ENCODE measurements at regions of chr1 and their contacts with region 1.

Region 1: GRCh38 chr1:163315773-163316374 is 5.9 kb upstream of the NUF2 start:
- DNase-seq: peak; percentile 49
- ATAC-seq: peak; percentile 24
- H3K4me3 ChIP-seq: no peak overlapping the region
- H3K4me3 Mint-ChIP-seq: no peak overlapping the region
- H3K27ac ChIP-seq: no peak overlapping the region
- H3K27ac Mint-ChIP-seq: no peak overlapping the region
- H3K4me1 ChIP-seq: peaks cover 1 to 2% of the 10 kb centered on the region in 2 donors
- H3K4me1 Mint-ChIP-seq: peaks cover 2% of the 10 kb centered on the region
- H3K27me3 ChIP-seq: no peaks in the 10 kb centered on the region
- H3K27me3 Mint-ChIP-seq: no peaks in the 10 kb centered on the region
- CTCF ChIP-seq: peak; percentile 85

Region 2: DNA sequence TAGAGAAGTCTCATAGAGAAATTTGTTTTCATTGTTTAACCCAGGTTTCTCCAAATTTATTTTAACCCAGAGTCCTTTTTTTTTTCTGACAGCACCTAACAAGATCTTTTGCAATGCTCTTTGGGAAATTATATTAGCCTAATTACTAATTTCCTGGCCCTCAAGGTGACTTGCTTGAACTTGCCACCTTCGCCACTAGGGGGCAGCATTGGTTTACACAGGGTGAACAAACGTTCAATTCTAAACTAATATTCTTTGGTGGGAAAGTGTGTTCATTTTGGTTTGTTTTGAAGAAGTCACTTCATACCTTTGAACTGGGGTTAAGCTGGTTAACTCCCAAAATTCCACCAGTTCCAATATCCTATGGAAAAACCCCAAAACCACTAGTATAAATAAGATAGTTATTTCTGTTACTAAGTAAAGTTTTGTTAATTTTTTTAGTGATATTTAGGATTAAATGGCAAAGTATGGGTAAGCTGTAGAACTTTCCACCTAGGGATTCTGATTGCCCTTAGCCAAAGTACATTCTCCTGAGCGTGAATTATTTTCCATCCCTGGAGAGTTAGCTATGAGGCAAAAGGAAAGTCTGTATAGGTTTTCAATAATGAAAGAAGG is 467.9 kb before region 1 on chr1:
- CTCF ChIA-PET with region 1: interaction called, 77 read pairs
- POLR2A ChIA-PET with region 1: no interaction called
- intact Hi-C with region 1: no loop called
- DNase-seq: peak; percentile 69
- ATAC-seq: peak; percentile 51
- H3K4me3 ChIP-seq: no peak overlapping the region
- H3K4me3 Mint-ChIP-seq: no peak overlapping the region
- H3K27ac ChIP-seq: no peak overlapping the region
- H3K27ac Mint-ChIP-seq: no peak overlapping the region
- H3K4me1 ChIP-seq: no peaks in the 10 kb centered on the region
- H3K4me1 Mint-ChIP-seq: no peaks in the 10 kb centered on the region
- H3K27me3 ChIP-seq: peaks cover 0 to 4% (median 0%) of the 10 kb centered on the region in 4 experiments
- H3K27me3 Mint-ChIP-seq: peaks cover 16% of the 10 kb centered on the region
- CTCF ChIP-seq: peak; percentile 96

Region 3: DNA sequence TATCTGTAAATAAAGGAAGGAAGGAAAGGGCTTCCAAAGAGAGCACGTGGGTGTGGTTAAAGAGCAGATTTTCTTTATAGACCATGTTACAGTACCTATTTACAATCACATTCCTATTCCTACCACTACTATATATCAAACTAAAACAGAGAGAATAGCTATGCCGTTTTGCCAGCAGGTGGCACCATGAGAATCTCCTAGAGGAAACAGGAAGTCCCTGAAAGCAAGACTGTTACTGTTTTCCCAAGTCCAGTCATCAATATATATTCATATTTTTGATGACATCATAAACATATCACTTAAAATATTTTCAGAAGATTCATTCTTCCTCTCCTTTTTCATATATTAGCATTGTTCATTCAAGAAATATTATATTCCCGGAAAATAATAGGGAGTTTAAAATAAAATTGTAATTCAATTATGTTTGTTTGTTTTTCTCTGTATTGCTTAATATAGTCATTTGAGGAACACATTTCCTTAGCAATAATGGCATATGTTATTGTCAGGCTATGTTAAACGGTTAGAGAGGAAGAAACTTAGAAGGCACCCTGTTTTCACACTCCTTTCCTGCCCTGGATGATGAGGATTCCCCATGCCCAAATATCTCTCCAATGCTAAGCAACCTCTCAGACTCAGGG is 461.5 kb before region 1 on chr1:
- CTCF ChIA-PET with region 1: interaction called, 77 read pairs
- POLR2A ChIA-PET with region 1: no interaction called
- intact Hi-C with region 1: no loop called
- DNase-seq: peak; percentile 57
- ATAC-seq: peak; percentile 41
- H3K4me3 ChIP-seq: no peak overlapping the region
- H3K4me3 Mint-ChIP-seq: no peak overlapping the region
- H3K27ac ChIP-seq: no peak overlapping the region
- H3K27ac Mint-ChIP-seq: no peak overlapping the region
- H3K4me1 ChIP-seq: no peaks in the 10 kb centered on the region
- H3K4me1 Mint-ChIP-seq: no peaks in the 10 kb centered on the region
- H3K27me3 ChIP-seq: peaks cover 0 to 4% (median 0%) of the 10 kb centered on the region in 4 experiments
- H3K27me3 Mint-ChIP-seq: peaks cover 9% of the 10 kb centered on the region
- CTCF ChIP-seq: peak; percentile 74

Region 4: GRCh38 chr1:163737261-163737660 is 421.4 kb after region 1 on chr1:
- CTCF ChIA-PET with region 1: no interaction called
- POLR2A ChIA-PET with region 1: no interaction called
- intact Hi-C with region 1: no loop called
- DNase-seq: no peak
- ATAC-seq: no peak
- H3K4me3 ChIP-seq: no peak overlapping the region
- H3K4me3 Mint-ChIP-seq: no peak overlapping the region
- H3K27ac ChIP-seq: no peak overlapping the region
- H3K27ac Mint-ChIP-seq: no peak overlapping the region
- H3K4me1 ChIP-seq: no peaks in the 10 kb centered on the region
- H3K4me1 Mint-ChIP-seq: no peaks in the 10 kb centered on the region
- H3K27me3 ChIP-seq: no peaks in the 10 kb centered on the region
- H3K27me3 Mint-ChIP-seq: no peaks in the 10 kb centered on the region
- CTCF ChIP-seq: no peak